Activated CD8-positive, alpha-beta T cell treated with anti-CD3 and anti-CD28 coated beads for 36 hours (primary cell): ENCODE measurements at regions of chr5 and their contacts with region 1.

Region 1: GRCh38 chr5:175444060-175444904 is at the start of gene DRD1:
- DNase-seq: peak; percentile 40
- ATAC-seq: peak; percentile 80
- H3K4me3 Mint-ChIP-seq: peak within 1 kb of the TSS; percentile 42
- H3K27ac Mint-ChIP-seq: no peak within 1 kb of the TSS
- H3K4me1 Mint-ChIP-seq: peaks cover 5% of the 10 kb centered on the region
- H3K27me3 Mint-ChIP-seq: peaks cover 57% of the 10 kb centered on the region
- CTCF ChIP-seq: peak; percentile 95
- total RNA-seq, gene DRD1: not detected

Region 2: DNA sequence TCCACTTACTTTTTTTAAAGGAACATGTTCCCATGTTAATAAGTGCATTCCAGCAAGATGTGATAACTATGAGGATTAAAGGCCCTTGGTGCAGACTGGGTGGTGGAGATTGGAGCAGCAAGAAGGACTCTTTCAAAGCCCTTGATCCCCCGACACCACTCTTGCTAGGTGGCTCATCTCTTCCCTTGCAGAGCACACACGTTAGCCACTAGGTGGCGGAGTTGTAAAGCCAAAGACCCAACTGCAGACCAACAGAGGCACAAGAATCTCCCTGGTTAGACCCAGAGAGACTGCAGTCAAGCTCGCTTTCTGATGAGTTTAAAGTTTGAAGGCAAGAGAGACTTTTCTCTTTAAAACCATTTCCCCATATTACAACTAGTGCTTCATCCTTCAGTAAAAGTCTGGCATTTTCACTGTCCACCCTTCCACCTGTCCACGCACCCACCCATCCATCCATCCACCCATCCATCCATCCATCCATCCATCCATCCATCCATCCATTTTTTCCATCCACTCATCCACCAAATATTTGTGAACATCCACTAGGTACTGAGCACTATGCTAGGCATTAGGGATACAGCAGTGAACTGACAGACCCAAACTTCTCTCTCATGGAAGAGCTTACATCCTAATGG is 493.0 kb before region 1 on chr5:
- CTCF ChIA-PET with region 1: interaction called, 14 read pairs
- POLR2A ChIA-PET with region 1: no interaction called
- intact Hi-C with region 1: loop called (anchors 5 kb)
- DNase-seq: peak; percentile 57
- ATAC-seq: peak; percentile 76
- H3K4me3 Mint-ChIP-seq: no peak overlapping the region
- H3K27ac Mint-ChIP-seq: no peak overlapping the region
- H3K4me1 Mint-ChIP-seq: no peaks in the 10 kb centered on the region
- H3K27me3 Mint-ChIP-seq: peaks cover 8% of the 10 kb centered on the region
- CTCF ChIP-seq: peak; percentile 80